ENCODE measurements at regions of chr12 and their contacts with region 1.

Region 1: DNA sequence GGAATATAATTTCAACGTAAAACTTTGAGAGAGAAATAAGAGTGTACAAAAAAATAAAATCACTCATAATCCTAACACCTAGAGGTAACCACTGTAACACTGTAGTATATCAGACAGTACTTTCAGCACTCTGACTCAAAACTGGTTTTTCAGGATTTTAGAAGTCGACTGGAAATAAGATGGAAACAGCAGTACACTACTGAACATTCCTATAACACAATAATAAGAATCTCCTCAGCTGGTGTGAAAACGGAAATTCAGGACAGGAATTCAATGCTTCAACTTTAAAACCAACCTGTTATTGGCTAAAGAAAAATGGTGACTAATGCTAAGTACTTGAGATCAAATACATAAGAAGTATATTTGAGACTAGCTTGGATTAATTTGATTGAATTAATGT is 12.3 kb upstream of the PITPNM2 start:
- DNase-seq: peak in 1 of 2 experiments; percentile 96
- H3K4me3 ChIP-seq: no peak overlapping the region
- H3K27ac ChIP-seq: peak overlapping the region; percentile 72
- H3K4me1 ChIP-seq: peaks cover 23% of the 10 kb centered on the region
- H3K27me3 ChIP-seq: no peaks in the 10 kb centered on the region
- CTCF ChIP-seq: no peak

Region 2: DNA sequence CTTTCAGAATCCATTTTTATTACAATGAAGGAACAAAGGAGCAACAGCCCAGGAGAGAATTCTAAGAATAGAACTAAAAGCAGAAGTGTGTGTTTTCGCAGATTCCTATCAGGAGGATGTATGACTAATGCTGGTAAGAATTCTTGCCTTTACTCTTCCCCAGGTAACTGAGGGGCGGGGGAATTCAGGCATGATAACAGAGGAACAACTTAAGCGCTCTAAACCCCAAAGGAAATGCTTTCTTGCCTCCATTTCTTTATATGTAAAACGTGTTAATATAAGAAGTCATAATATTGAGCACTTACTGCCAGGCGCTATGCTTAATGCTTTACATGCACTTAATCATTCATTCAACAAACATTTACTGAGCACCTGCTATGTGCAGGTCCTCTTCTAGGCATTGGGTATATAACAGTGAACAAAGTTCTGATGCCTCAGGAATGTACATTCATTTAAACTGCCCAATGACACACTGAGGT is 437.1 kb before region 1 on chr12:
- CTCF ChIA-PET with region 1: interaction called, 11 read pairs
- POLR2A ChIA-PET with region 1: interaction called, 3 read pairs
- intact Hi-C with region 1: no loop called
- DNase-seq: peak; percentile 65 to 90
- H3K4me3 ChIP-seq: peak overlapping the region; percentile 77
- H3K27ac ChIP-seq: peak overlapping the region; percentile 84
- H3K4me1 ChIP-seq: peaks cover 34% of the 10 kb centered on the region
- H3K27me3 ChIP-seq: no peaks in the 10 kb centered on the region
- CTCF ChIP-seq: no peak

Region 3: DNA sequence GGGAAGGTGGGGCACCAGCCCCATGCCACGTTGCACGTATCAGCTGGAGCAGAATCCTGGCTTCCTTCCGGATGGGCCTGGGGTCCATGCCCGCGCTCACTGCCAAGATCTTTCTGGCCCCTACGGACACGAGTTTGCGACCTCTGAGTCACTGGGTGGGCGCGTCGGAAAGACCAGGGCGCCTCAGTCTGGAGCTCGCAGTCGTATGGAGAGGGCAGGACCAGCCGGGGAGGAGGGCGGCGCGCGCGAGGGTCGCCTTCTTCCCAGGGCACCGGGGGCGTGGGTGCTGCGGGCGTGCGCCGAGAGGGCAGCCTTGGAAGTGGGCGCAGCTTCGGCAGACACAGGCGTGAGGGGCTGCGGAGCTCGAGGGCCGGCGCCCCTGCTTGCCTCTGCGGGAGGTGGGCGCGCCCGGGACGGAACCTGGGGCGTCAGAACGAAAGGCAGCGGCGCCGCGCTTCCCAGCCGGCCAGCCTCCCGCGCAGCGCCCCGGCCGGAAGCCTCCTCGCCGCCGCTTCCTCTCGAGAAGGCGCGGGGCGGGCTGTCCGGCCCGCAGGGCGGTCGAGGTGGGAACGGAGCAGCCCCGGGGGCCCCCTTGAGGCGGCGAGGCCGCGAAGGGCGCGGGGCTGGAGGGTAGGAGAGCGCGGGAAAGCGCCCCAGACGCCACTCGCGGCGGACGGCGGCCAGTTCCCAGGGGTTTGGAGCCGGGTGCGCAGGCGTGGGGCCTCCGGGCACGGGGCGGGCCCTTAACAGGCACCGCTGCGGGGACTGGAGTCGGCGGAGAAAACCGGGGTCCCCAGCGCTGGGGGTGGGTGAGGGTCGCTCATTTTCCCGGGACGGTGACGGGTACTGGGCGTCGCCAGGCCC is 182.8 kb before region 1 on chr12 and contains the start of gene ARL6IP4:
- CTCF ChIA-PET with region 1: no interaction called
- POLR2A ChIA-PET with region 1: no interaction called
- intact Hi-C with region 1: loop called (anchors 10 kb)
- DNase-seq: peak in 1 of 2 experiments; percentile 61
- H3K4me3 ChIP-seq: peak within 1 kb of the TSS; percentile 69
- H3K27ac ChIP-seq: no peak within 1 kb of the TSS
- H3K4me1 ChIP-seq: peaks cover 16% of the 10 kb centered on the region; the same call in 1 of the 2 replicates
- H3K27me3 ChIP-seq: no peaks in the 10 kb centered on the region
- CTCF ChIP-seq: no peak
- total RNA-seq, gene ARL6IP4: 162 and 191 TPM in 2 replicates

Region 4: GRCh38 chr12:123106628-123107359 is 56.4 kb before region 1 on chr12:
- CTCF ChIA-PET with region 1: no interaction called
- POLR2A ChIA-PET with region 1: interaction called, 4 read pairs
- intact Hi-C with region 1: loop called (anchors 2 kb)
- DNase-seq: peak in 1 of 2 experiments; percentile 50
- H3K4me3 ChIP-seq: no peak overlapping the region
- H3K27ac ChIP-seq: no peak overlapping the region
- H3K4me1 ChIP-seq: peaks cover 49% of the 10 kb centered on the region
- H3K27me3 ChIP-seq: no peaks in the 10 kb centered on the region
- CTCF ChIP-seq: no peak

Measured in PC-9 (cell line).